ENCODE measurements at regions of chr18 and their contacts with region 1.

Region 1: DNA sequence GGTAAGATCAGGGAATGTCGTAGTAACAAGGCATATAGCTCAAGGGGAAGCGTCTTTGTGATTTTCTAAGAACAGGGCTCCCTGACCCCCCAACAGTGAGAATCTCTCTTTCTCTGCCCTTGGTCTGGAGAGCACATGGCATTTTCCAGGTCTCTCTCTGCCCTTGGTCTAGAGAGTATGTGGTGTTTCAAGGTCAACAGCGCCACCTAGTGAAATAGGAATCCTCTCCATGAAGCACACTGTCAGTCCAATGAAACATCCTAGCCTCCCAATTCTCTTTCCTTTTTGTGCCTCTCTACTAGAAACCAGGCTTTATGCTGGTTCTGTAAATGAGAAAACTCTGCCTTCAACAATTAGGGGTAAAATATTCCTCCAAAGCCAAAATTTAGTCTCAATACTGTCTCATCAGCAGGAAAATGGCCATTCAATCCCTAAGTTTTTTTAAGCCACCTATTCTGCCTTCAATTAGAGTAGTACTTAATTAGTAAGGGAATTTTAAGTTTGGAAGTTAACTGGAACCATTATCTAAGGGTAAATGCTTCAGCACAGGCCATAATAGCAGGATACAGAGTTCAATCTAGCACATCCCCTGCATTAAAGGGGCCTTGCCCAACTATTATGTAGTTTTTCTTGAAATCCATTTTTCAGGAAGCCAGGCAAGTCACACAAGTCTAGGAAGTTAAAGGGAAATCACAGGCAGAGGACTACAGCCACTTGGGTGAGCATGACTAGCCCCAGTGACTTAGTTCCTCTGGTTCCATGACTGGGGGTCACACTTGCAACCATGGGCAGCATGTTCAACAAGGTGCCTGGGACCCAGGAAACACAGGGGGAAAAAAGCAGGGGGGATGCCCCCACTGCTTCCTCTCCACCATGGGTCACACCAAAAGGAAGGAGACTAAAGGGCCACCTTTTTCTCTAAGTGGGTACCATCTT is 12.4 kb downstream of the DYM start:
- DNase-seq: no peak
- H3K4me3 ChIP-seq: no peak overlapping the region
- CTCF ChIP-seq: peak; percentile 54

Region 2: GRCh38 chr18:49431165-49431962 is 16.7 kb before region 1 on chr18:
- CTCF ChIA-PET with region 1: interaction called, 21 read pairs
- POLR2A ChIA-PET with region 1: interaction called, 3 read pairs
- DNase-seq: no peak
- H3K4me3 ChIP-seq: no peak overlapping the region
- CTCF ChIP-seq: no peak

Region 3: GRCh38 chr18:49459404-49460171 is 11.5 kb after region 1 on chr18:
- CTCF ChIA-PET with region 1: interaction called, 12 read pairs
- POLR2A ChIA-PET with region 1: no interaction called
- DNase-seq: no peak
- H3K4me3 ChIP-seq: peak overlapping the region; percentile 93
- CTCF ChIP-seq: no peak